Breast epithelium (tissue), 4 donors: ENCODE measurements at regions of chr17 and their contacts with region 1.

Region 1: DNA sequence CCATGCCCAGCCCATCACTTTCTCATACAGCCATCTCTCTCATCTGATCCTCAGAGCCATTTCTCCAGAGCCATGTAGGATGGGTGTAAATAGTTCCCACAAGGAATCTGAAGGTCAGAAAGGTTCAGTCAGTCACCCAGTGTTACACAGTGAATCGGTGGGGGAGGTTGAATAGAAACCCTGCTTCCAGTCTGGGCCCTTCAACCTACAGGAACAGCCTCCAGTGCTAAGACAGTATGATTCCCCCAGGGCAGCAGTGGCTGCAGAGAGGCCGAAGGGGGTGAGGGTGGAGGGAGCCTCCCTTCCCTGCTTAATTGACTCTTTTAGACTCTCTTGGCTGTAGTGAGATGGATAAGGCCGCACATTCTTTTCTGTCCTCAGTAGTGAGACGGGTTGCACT is 3.6 kb downstream of the WNT9B start:
- DNase-seq: no peak
- H3K4me3 ChIP-seq: no peak overlapping the region
- H3K27ac ChIP-seq: no peak overlapping the region
- H3K4me1 ChIP-seq: no peaks in the 10 kb centered on the region
- H3K27me3 ChIP-seq: peaks cover 9 to 20% of the 10 kb centered on the region in 2 donors
- CTCF ChIP-seq: no peak
- POLR2A ChIP-seq: no peak

Region 2: GRCh38 chr17:46910179-46910927 is 55.4 kb after region 1 on chr17:
- intact Hi-C with region 1: no loop called
- DNase-seq: no peak
- H3K4me3 ChIP-seq: no peak overlapping the region
- H3K27ac ChIP-seq: no peak overlapping the region
- H3K4me1 ChIP-seq: no peaks in the 10 kb centered on the region
- H3K27me3 ChIP-seq: peaks cover 0 to 4% of the 10 kb centered on the region in 2 donors
- CTCF ChIP-seq: no peak
- POLR2A ChIP-seq: no peak

Region 3: GRCh38 chr17:47262586-47262985 is 407.6 kb after region 1 on chr17:
- intact Hi-C with region 1: loop called (anchors 5 kb)
- DNase-seq: no peak
- H3K4me3 ChIP-seq: no peak overlapping the region
- H3K27ac ChIP-seq: no peak overlapping the region
- H3K4me1 ChIP-seq: no peaks in the 10 kb centered on the region
- H3K27me3 ChIP-seq: no peaks in the 10 kb centered on the region
- CTCF ChIP-seq: no peak
- POLR2A ChIP-seq: no peak

Region 4: GRCh38 chr17:47276868-47277267 is 421.9 kb after region 1 on chr17:
- intact Hi-C with region 1: no loop called
- DNase-seq: peak; percentile 68 to 72
- H3K4me3 ChIP-seq: no peak overlapping the region
- H3K27ac ChIP-seq: peak overlapping the region; percentile 84 to 91
- H3K4me1 ChIP-seq: peaks cover 15 to 42% of the 10 kb centered on the region in 2 donors
- H3K27me3 ChIP-seq: no peaks in the 10 kb centered on the region
- CTCF ChIP-seq: no peak
- POLR2A ChIP-seq: no peak